ENCODE measurements at regions of chr22 and their contacts with region 1.

Region 1: GRCh38 chr22:37752466-37753087 is 55.2 kb upstream of the GCAT start:
- DNase-seq: peak in 6 of 10 donors; percentile 17 to 70 (median 47)
- H3K4me3 ChIP-seq: peak overlapping the region in 2 of 59 donors; percentile 8 to 9
- H3K27ac ChIP-seq: peak overlapping the region in 51 of 59 donors; percentile 0 to 81 (median 58)
- H3K27me3 ChIP-seq: no peaks in the 10 kb centered on the region
- CTCF ChIP-seq: peak in 1 of 56 donors; percentile 12

Region 2: DNA sequence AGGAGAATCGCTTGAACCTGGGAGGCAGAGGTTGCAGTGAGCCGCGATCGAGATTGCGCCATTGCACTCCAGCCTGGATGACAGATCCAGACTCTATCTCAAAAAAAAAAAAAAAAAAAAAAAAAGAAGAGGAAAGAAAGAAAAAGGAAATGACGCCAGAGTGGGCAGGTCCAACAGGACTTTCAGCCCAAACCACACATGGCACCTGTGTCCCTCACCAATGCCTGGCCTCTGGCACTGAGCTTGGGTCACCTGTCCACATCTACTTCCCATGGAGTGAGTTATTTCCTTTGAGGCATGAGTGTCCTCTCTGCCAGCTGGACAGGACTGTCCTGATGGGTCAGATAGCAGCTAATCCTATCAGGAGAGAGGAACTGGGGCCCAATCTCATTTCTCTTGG is 39.9 kb after region 1 on chr22:
- intact Hi-C with region 1: loop called in 1 of 2 experiments (anchors 5 kb)
- DNase-seq: no peak
- H3K4me3 ChIP-seq: no peak overlapping the region
- H3K27ac ChIP-seq: no peak overlapping the region
- H3K27me3 ChIP-seq: no peaks in the 10 kb centered on the region
- CTCF ChIP-seq: no peak

Measured in dorsolateral prefrontal cortex (tissue), 120 donors.